ENCODE measurements at regions of chr3 and their contacts with region 1.

Region 1: DNA sequence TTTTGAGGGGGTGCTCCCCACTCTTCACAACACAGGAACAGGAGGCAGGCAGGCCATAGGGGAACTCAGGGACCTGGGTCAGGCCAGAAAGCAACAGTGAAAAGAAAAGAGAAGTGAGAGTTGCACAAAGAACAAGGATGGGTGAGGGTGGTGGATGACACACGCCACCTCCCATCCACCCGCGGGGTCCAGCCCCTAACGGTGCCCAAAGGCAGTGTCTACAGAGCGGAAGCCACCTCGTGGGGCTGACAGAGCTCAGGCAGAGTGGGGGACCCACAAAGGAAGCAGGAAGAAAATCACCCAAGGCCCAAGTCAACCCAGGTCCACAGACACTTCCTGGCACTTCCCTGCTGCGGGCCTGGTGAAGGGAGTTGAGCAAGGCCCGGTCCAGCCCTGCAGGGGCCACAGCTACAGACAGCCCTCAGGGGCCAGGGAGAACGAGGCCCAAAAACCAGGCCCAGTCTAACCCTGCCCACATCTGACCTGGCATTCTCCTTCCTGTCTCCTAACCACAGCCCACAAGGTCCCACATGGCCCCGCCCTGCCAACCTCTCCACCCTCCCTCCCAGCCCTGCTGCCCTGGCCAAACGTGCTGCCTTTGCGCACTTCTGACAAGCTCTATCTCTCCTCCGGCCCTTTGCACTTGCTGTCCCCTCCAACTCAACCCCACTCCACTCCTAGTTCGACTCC is 5.9 kb downstream of the NUP210 start:
- DNase-seq: peak; percentile 76
- ATAC-seq: peak; percentile 93
- H3K4me3 Mint-ChIP-seq: peak overlapping the region; percentile 79
- H3K27ac Mint-ChIP-seq: peak overlapping the region; percentile 98
- H3K4me1 Mint-ChIP-seq: peaks cover 67% of the 10 kb centered on the region
- H3K27me3 Mint-ChIP-seq: no peaks in the 10 kb centered on the region
- CTCF ChIP-seq: no peak

Region 2: GRCh38 chr3:11548721-11549131 is 1865.5 kb before region 1 on chr3:
- CTCF ChIA-PET with region 1: no interaction called
- POLR2A ChIA-PET with region 1: no interaction called
- intact Hi-C with region 1: no loop called
- DNase-seq: no peak
- ATAC-seq: no peak
- H3K4me3 Mint-ChIP-seq: no peak overlapping the region
- H3K27ac Mint-ChIP-seq: no peak overlapping the region
- H3K4me1 Mint-ChIP-seq: peaks cover 21% of the 10 kb centered on the region
- H3K27me3 Mint-ChIP-seq: no peaks in the 10 kb centered on the region
- CTCF ChIP-seq: no peak

Region 3: GRCh38 chr3:13133471-13133981 is 280.7 kb before region 1 on chr3:
- CTCF ChIA-PET with region 1: no interaction called
- POLR2A ChIA-PET with region 1: no interaction called
- intact Hi-C with region 1: no loop called
- DNase-seq: no peak
- ATAC-seq: no peak
- H3K4me3 Mint-ChIP-seq: no peak overlapping the region
- H3K27ac Mint-ChIP-seq: no peak overlapping the region
- H3K4me1 Mint-ChIP-seq: no peaks in the 10 kb centered on the region
- H3K27me3 Mint-ChIP-seq: peaks cover 20% of the 10 kb centered on the region
- CTCF ChIP-seq: no peak

Region 4: DNA sequence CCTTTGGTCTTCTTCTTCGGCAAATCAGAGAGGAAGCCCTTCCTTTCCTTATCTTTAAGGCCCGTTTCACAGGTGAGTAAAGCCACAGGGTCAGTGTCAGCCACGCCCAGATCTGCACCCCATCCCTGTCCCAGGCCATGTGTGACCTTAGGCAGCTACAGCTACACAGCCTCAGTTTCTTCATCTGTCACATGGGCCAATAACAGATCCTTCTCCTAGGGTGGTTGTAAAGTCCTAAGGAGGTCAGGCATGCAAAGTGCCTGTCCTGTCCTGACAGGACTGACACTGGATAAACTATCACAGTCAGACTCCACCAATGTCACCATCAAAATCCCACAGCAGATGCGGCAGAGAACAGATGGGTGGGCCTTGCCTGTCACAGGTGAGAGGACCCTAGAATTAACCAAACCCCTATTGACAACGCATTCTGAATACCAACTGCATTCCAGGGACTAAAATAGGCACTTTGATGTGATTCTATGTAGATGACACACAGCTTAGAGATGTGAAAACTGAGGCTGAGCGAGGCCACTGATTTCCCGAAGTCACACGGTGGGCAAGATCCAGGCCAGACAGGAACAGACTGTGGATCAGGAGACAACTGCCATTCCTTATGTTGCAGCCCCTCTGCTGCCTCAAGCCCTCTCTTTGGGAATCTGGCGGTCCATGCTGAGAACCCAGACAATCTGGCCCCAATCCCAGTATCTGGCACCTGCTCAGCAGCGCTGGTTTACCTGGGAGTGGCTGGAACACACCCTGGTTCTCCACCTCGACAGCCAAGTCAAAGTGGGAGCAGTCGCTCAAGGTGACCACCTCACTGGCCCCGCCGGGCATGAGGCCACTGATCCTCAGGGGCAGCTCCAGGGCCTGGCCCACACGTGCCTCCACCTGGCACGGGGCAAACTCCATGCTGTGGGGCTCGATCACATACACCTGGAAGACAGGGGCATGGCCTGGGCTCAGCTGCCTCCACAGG is 42.8 kb before region 1 on chr3:
- CTCF ChIA-PET with region 1: no interaction called
- POLR2A ChIA-PET with region 1: no interaction called
- intact Hi-C with region 1: loop called (anchors 5 kb)
- DNase-seq: no peak
- ATAC-seq: no peak
- H3K4me3 Mint-ChIP-seq: no peak overlapping the region
- H3K27ac Mint-ChIP-seq: no peak overlapping the region
- H3K4me1 Mint-ChIP-seq: no peaks in the 10 kb centered on the region
- H3K27me3 Mint-ChIP-seq: no peaks in the 10 kb centered on the region
- CTCF ChIP-seq: no peak

Region 5: DNA sequence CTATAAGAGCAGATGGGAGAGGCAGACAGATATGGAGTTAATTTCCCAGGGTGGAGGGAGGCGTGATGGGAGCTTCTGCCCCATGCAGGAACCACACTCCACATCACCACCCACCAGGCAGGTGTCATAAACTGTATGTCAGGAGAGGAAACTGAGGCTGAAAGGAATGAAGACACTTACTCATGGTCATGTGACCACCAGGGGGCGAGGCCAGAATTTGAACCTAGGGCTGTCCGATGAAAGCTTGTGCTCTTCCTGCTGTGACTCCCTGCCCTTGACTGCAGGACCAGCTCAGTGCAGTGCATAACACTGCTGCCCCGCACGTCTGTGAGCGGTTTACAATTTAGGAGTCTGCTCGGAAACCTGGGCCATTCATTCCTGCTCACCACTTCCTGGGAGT is 22.9 kb before region 1 on chr3:
- CTCF ChIA-PET with region 1: interaction called, 3 read pairs
- POLR2A ChIA-PET with region 1: interaction called, 7 read pairs
- intact Hi-C with region 1: loop called (anchors 1 kb)
- DNase-seq: no peak
- ATAC-seq: no peak
- H3K4me3 Mint-ChIP-seq: no peak overlapping the region
- H3K27ac Mint-ChIP-seq: no peak overlapping the region
- H3K4me1 Mint-ChIP-seq: no peaks in the 10 kb centered on the region
- H3K27me3 Mint-ChIP-seq: no peaks in the 10 kb centered on the region
- CTCF ChIP-seq: no peak